Activated T-helper 2 cell treated with anti-CD3 and anti-CD28 coated beads, Interferon-gamma antibody, Interleukin-2, Interleukin-4, amounts not matched to agents 10 μg/mL and 5 μg/mL and 100 μg/mL, durations not matched to agents 14 hours and 24 hours and 36 hours (primary cell): ENCODE measurements at regions of chr19 and their contacts with region 1.

Region 1: GRCh38 chr19:4065430-4066175 is 1.1 kb downstream of the ZBTB7A start:
- DNase-seq: peak; percentile 96
- H3K4me3 Mint-ChIP-seq: peak overlapping the region; percentile 52
- H3K27ac Mint-ChIP-seq: no peak overlapping the region
- H3K4me1 Mint-ChIP-seq: peaks cover 19% of the 10 kb centered on the region
- H3K27me3 Mint-ChIP-seq: no peaks in the 10 kb centered on the region

Region 2: DNA sequence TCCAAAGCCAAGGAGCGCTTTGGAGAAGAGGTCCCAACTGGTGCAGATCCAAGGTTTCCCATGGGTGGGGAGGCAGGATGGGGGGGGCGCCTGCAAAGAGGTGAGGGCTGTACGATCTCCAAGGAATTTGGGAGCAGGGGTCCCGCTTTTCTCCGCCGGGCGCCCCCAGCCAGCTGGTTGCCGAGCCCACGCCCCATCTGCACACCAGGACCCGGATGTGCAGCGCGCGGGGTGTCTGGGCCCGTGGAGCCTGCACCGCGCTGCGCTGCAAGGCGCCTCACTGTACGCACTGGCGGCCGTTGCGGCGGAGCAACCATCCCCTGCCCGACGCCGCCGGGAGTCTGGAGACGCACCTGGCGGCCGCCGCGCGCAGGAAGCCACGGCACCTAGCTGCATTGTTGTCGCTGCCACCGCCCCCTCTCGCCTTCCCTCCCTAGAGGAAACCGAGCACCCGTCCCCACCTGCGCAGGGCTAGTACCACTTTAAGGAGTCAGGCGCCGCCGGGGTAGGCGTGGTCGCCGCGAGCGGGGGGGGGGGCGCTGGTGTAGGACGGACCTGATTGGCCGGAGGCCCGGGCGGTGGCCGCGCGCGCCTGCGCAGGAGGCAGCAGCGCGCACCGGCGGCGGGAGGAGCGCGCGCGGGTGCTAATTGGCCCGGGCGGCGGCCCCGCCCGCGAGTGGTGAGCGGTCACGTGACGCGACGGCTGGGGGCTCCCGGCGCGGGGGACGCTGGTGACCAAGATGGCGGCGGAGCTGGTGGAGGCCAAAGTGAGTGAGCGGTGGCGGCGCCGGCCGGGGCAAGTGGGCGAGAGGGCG is 58.4 kb before region 1 on chr19 and contains the start of gene PIAS4:
- intact Hi-C with region 1: loop called (anchors 5 kb)
- DNase-seq: peak; percentile 94
- H3K4me3 Mint-ChIP-seq: peak within 1 kb of the TSS; percentile 86
- H3K27ac Mint-ChIP-seq: peak within 1 kb of the TSS; percentile 73
- H3K4me1 Mint-ChIP-seq: peaks cover 8% of the 10 kb centered on the region
- H3K27me3 Mint-ChIP-seq: no peaks in the 10 kb centered on the region
- total RNA-seq, gene PIAS4: 31.5 and 36.3 TPM in 2 replicates

Region 3: DNA sequence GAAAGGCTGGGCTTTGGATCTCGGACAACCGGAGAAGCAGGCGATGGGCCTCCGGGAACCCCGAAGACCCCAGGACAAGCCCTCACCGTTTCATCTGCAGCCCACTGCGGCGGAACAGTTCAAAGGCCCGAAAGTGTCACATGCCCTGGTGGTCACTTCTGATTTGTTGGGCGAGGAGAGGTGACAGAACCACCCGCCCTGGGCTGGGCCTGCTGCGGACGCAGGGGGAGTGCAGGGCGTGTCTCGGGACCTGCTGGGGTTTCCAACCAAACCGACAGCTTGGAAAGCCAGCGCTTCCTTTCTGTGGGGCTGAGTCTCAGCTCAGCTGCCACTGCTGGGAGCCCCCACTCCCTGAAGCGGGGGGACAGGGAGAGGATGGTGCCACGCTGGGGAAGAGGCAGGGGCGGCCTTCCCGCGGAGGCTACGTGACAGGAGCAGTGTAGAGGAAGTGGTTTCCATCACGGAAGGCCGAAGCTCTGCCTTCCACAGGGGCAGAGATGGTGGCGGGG is 23.9 kb after region 1 on chr19:
- intact Hi-C with region 1: loop called (anchors 1 kb)
- DNase-seq: peak; percentile 72
- H3K4me3 Mint-ChIP-seq: peak overlapping the region; percentile 81
- H3K27ac Mint-ChIP-seq: peak overlapping the region; percentile 94
- H3K4me1 Mint-ChIP-seq: peaks cover 27% of the 10 kb centered on the region
- H3K27me3 Mint-ChIP-seq: no peaks in the 10 kb centered on the region

Region 4: GRCh38 chr19:4123615-4124568 is 58.3 kb after region 1 on chr19 and contains the start of gene MAP2K2:
- intact Hi-C with region 1: loop called (anchors 5 kb)
- DNase-seq: peak; percentile 93
- H3K4me3 Mint-ChIP-seq: peak within 1 kb of the TSS; percentile 94
- H3K27ac Mint-ChIP-seq: peak within 1 kb of the TSS; percentile 91
- H3K4me1 Mint-ChIP-seq: peaks cover 17% of the 10 kb centered on the region
- H3K27me3 Mint-ChIP-seq: no peaks in the 10 kb centered on the region
- total RNA-seq, gene MAP2K2: 131 and 141 TPM in 2 replicates

Region 5: GRCh38 chr19:4246767-4247593 is 181.4 kb after region 1 on chr19 and contains the start of gene YJU2:
- intact Hi-C with region 1: loop called (anchors 5 kb)
- DNase-seq: peak; percentile 99
- H3K4me3 Mint-ChIP-seq: peak within 1 kb of the TSS; percentile 88
- H3K27ac Mint-ChIP-seq: peak within 1 kb of the TSS; percentile 96
- H3K4me1 Mint-ChIP-seq: peaks cover 10% of the 10 kb centered on the region
- H3K27me3 Mint-ChIP-seq: no peaks in the 10 kb centered on the region
- total RNA-seq, gene YJU2: 29.7 and 30.8 TPM in 2 replicates